Activated CD8-positive, alpha-beta T cell treated with anti-CD3 and anti-CD28 coated beads, Interleukin-2, amount 10 ng/mL, durations not matched to agents 7 days and 5 days (primary cell): ENCODE measurements at regions of chr6 and their contacts with region 1.

Region 1: DNA sequence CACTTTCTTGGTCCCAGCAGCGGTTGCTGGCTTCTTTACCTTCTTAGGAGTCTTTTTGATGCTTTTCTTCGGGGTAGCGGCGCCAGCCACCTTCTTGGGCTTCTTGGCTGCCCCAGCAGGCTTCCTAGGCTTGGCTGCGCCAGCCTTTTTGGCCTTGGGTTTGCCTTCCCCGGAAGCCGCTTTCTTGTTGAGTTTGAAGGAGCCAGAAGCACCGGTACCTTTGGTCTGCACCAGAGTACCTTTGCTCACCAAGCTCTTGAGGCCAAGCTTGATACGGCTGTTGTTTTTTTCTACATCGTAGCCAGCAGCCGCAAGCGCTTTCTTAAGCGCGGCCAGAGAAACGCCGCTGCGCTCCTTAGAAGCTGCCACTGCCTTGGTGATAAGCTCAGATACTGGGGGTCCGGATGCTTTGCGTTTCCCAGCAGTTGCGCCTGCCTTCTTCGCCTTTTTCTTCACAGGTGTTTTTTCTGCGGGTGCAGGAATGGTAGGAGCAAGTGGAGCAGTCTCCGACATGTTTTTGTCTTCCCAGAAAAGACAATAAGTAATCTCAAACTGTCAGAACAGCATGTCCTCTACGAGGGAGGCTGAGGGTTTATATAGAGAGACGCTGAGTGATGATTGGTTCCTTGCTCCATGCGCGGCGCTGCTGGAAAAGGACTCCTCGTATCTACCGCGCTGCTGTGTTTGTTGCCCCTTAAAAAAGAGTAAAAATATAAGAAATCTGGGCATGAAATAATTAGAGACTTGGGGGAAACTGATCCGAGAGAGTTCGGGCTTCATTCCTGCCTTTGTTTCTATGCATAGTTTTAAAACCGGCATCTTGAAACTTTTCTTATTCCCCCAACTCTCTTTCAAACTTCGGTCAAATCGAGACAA is 130.3 kb upstream of the BTN3A2 start:
- DNase-seq: peak; percentile 89
- ATAC-seq: peak; percentile 64
- H3K4me3 Mint-ChIP-seq: peak overlapping the region; percentile 78
- H3K27ac Mint-ChIP-seq: peak overlapping the region; percentile 99
- H3K4me1 Mint-ChIP-seq: peaks cover 41% of the 10 kb centered on the region
- H3K27me3 Mint-ChIP-seq: no peaks in the 10 kb centered on the region

Region 2: GRCh38 chr6:26031595-26032339 is 202.9 kb before region 1 on chr6:
- CTCF ChIA-PET with region 1: interaction called, 5 read pairs
- POLR2A ChIA-PET with region 1: interaction called, 109 read pairs
- DNase-seq: peak; percentile 97
- ATAC-seq: peak; percentile 66
- H3K4me3 Mint-ChIP-seq: peak overlapping the region; percentile 93
- H3K27ac Mint-ChIP-seq: peak overlapping the region; percentile 99
- H3K4me1 Mint-ChIP-seq: peaks cover 68% of the 10 kb centered on the region
- H3K27me3 Mint-ChIP-seq: peaks cover 3% of the 10 kb centered on the region

Region 3: DNA sequence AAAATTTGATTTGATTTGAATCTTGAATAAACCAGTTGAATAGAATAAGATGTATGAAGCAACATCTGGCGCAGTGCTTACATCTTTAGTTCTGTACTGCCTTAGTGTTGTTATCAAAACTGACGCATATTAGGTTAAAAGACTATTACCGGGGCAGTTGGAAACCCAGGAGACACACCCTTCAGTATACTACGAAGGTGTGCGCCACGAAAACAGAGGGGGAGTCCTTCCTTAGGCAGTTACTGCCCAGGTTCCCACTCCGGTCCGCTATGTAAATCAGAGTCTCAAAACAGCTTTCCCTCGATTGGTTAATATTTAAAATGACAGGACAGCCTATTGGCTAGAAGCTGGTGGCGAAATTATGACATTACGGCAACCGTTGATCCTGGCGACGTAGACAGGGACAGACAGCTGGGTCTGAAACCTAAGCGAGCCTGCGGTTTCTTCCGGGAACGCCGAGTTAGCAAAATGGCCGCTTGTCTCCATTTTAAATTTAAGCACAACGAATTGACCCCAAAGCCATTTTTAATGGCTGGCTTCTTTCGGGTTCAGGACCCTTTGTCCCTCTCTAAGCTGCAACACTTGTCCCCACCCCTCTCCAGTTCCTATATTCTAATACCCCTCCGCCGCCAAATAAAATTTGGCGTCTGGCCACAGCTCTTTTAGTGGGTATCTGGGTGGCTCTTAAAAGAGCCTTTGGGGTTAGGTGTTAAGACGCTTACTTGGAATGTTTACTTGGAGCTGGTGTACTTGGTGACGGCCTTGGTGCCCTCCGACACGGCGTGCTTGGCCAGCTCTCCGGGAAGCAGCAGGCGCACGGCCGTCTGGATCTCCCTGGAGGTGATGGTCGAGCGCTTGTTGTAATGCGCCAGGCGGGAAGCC is 111.6 kb before region 1 on chr6:
- CTCF ChIA-PET with region 1: no interaction called
- POLR2A ChIA-PET with region 1: interaction called, 160 read pairs
- DNase-seq: peak; percentile 98
- ATAC-seq: peak; percentile 50
- H3K4me3 Mint-ChIP-seq: peak overlapping the region; percentile 95
- H3K27ac Mint-ChIP-seq: peak overlapping the region; percentile 100
- H3K4me1 Mint-ChIP-seq: peaks cover 44% of the 10 kb centered on the region
- H3K27me3 Mint-ChIP-seq: peaks cover 1% of the 10 kb centered on the region

Region 4: GRCh38 chr6:26141378-26141904 is 93.2 kb before region 1 on chr6:
- CTCF ChIA-PET with region 1: no interaction called
- POLR2A ChIA-PET with region 1: no interaction called
- DNase-seq: no peak
- ATAC-seq: no peak
- H3K4me3 Mint-ChIP-seq: no peak overlapping the region
- H3K27ac Mint-ChIP-seq: no peak overlapping the region
- H3K4me1 Mint-ChIP-seq: peaks cover 5% of the 10 kb centered on the region
- H3K27me3 Mint-ChIP-seq: no peaks in the 10 kb centered on the region

Region 5: DNA sequence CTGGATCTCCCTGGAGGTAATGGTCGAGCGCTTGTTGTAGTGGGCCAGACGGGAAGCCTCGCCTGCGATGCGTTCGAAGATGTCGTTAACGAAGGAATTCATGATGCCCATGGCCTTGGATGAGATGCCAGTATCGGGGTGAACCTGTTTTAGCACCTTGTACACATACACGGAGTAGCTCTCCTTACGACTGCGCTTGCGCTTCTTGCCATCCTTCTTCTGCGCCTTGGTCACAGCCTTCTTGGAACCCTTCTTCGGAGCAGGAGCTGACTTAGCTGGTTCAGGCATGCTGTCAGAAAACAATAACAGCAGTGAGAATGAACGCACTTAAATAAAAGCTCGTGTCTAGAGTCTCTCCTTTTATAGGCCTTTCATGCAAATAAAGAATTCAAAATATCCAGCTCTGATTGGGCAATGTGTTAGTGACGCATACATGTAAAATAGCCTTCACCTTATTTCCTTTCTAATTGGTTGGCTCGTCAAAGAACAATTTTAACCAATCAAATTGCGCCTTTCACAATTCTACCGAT is 18.2 kb before region 1 on chr6:
- CTCF ChIA-PET with region 1: interaction called, 14 read pairs
- POLR2A ChIA-PET with region 1: interaction called, 1,100 read pairs
- DNase-seq: peak; percentile 93
- ATAC-seq: peak; percentile 67
- H3K4me3 Mint-ChIP-seq: no peak overlapping the region
- H3K27ac Mint-ChIP-seq: no peak overlapping the region
- H3K4me1 Mint-ChIP-seq: peaks cover 43% of the 10 kb centered on the region
- H3K27me3 Mint-ChIP-seq: no peaks in the 10 kb centered on the region

Region 6: GRCh38 chr6:26285143-26286134 is 50.8 kb after region 1 on chr6:
- CTCF ChIA-PET with region 1: no interaction called
- POLR2A ChIA-PET with region 1: interaction called, 104 read pairs
- DNase-seq: peak; percentile 99
- ATAC-seq: peak; percentile 79
- H3K4me3 Mint-ChIP-seq: peak overlapping the region; percentile 93
- H3K27ac Mint-ChIP-seq: peak overlapping the region; percentile 95
- H3K4me1 Mint-ChIP-seq: peaks cover 42% of the 10 kb centered on the region
- H3K27me3 Mint-ChIP-seq: peaks cover 2% of the 10 kb centered on the region

Region 7: GRCh38 chr6:27809939-27810767 is 1575.5 kb after region 1 on chr6:
- CTCF ChIA-PET with region 1: no interaction called
- POLR2A ChIA-PET with region 1: interaction called, 48 read pairs
- DNase-seq: peak; percentile 89
- ATAC-seq: peak; percentile 32
- H3K4me3 Mint-ChIP-seq: peak overlapping the region; percentile 95
- H3K27ac Mint-ChIP-seq: peak overlapping the region; percentile 98
- H3K4me1 Mint-ChIP-seq: peaks cover 66% of the 10 kb centered on the region
- H3K27me3 Mint-ChIP-seq: peaks cover 2% of the 10 kb centered on the region

Region 8: DNA sequence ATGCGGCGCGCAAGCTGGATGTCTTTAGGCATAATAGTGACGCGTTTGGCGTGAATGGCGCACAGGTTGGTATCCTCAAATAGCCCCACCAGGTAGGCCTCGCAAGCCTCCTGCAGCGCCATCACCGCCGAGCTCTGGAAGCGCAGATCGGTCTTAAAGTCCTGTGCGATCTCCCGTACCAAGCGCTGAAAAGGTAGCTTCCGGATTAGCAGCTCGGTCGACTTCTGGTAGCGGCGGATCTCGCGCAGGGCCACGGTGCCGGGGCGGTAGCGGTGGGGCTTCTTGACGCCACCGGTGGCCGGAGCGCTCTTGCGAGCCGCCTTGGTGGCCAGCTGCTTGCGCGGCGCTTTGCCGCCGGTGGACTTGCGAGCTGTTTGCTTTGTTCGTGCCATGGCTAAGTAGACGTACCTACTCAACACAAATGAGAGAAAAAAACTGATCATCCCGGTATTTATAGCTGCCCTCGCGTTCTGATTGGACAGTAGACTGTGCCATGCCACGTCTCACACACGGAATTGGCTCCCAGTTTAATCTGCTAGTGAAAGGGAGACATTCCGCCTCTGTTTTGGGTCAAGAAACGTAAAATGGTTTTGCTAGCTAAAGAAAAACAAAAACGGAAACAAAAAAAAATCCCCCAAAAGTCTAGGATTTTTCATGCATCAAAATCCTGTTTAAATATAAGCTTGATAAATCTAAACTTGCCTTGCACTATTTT is 1637.4 kb after region 1 on chr6:
- CTCF ChIA-PET with region 1: no interaction called
- POLR2A ChIA-PET with region 1: interaction called, 57 read pairs
- DNase-seq: peak; percentile 92
- ATAC-seq: peak; percentile 62
- H3K4me3 Mint-ChIP-seq: peak overlapping the region; percentile 85
- H3K27ac Mint-ChIP-seq: peak overlapping the region; percentile 99
- H3K4me1 Mint-ChIP-seq: peaks cover 64% of the 10 kb centered on the region
- H3K27me3 Mint-ChIP-seq: no peaks in the 10 kb centered on the region